ENCODE measurements at regions of chr11 and their contacts with region 1.

Region 1: DNA sequence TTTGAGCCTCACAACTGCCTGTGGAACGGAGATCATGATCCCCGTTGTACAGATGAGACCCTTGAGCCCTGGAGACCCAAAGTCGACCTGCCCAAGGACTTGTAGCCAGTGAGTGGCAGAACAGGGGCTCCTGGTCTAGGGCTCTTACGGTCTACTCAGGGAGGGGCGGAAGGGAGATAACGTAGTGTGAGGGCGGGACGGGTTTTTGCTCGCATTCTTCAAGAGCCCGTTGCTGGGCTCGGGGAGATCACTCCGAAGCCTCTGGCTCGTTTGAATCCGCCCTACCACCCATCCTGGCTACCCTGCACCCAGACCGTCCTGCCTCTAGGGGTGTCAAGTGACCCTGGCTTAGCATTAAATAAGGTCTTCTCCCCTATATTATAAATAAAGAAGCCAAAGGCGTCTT is 639 bp downstream of the CRY2 start:
- DNase-seq: peak; percentile 49
- H3K27ac ChIP-seq: peak overlapping the region; percentile 77
- CTCF ChIP-seq: no peak

Region 2: DNA sequence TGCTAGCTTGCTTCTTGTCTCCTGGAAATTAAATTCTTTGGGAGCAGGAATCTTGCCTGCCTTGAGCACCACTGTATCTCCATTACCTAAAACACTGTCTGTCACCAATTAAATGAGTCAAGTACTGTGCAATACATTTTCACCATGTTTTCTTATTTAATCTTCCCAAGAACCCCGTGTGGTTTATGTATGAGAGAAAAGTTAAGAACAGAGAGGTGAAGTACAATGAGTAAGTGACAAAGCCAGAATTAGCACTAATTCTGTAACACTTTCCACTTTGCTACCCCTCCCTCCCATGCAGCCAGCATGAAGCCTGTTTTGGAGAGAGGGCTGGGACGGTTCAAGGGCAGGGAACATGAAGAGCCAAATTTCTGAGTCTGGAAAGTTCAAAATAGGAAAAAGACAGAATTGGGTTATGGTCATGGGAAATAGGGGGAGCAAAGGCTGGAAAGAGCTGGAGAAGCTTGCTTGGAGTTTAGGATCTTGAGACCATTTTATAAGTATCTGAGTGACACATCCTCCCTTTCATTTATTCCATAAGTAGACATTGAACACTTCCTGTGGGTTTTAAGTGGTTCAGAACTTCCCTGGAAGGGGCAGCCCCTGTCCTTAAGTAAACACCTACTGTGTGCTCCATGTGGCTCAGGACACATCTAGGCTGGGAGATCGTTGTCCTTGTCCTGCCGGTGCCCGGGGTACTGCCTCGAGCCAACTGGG is 122.0 kb before region 1 on chr11:
- CTCF ChIA-PET with region 1: no interaction called
- POLR2A ChIA-PET with region 1: no interaction called
- DNase-seq: no peak
- H3K27ac ChIP-seq: no peak overlapping the region
- CTCF ChIP-seq: no peak

Region 3: GRCh38 chr11:45818961-45819605 is 28.8 kb before region 1 on chr11:
- CTCF ChIA-PET with region 1: no interaction called
- POLR2A ChIA-PET with region 1: no interaction called
- DNase-seq: no peak
- H3K27ac ChIP-seq: no peak overlapping the region
- CTCF ChIP-seq: no peak

Region 4: DNA sequence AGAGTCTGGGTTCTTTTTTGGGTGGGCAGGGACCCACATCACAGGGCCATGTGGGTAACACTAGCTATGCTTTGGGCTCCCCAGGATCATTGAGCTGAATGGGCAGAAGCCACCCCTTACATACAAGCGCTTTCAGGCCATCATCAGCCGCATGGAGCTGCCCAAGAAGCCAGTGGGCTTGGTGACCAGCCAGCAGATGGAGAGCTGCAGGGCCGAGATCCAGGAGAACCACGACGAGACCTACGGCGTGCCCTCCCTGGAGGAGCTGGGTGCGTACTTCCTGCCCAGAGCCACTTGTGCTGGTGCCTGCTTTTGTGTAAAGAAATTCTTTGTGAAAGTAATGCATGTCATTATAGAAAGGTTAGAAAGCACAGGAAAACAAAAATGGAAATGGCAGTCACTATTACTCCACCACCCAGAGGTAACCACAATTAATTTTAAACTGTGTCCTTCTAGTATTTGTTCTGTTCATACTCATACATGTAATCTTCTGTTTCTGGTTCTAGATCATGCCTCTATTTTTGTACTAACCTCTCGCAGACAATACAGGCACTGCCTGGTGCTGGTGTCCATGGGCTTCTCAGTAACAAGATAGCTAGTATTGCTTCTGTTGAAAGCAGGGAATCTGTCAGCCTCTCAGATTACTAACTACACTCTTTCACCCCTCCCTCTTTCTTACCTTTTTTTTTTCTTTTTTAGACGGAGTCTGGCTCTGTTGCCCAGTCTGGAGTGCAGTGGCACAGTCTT is 13.0 kb after region 1 on chr11:
- CTCF ChIA-PET with region 1: no interaction called
- POLR2A ChIA-PET with region 1: interaction called, 10 read pairs
- DNase-seq: no peak
- H3K27ac ChIP-seq: peak overlapping the region; percentile 86
- CTCF ChIP-seq: no peak

Region 5: GRCh38 chr11:46075168-46075567 is 227.3 kb after region 1 on chr11:
- CTCF ChIA-PET with region 1: no interaction called
- POLR2A ChIA-PET with region 1: no interaction called
- DNase-seq: peak; percentile 65
- H3K27ac ChIP-seq: no peak overlapping the region
- CTCF ChIP-seq: no peak

Measured in RWPE1 (cell line).